ENCODE measurements at regions of chr1 and their contacts with region 1.

Region 1: GRCh38 chr1:150186789-150187559 is 37.3 kb downstream of the PLEKHO1 start:
- DNase-seq: peak; percentile 32
- H3K4me3 Mint-ChIP-seq: peak overlapping the region; percentile 16
- H3K27ac Mint-ChIP-seq: peak overlapping the region; percentile 41
- H3K4me1 Mint-ChIP-seq: peaks cover 19% of the 10 kb centered on the region
- H3K27me3 Mint-ChIP-seq: no peaks in the 10 kb centered on the region

Region 2: GRCh38 chr1:149886396-149887195 is 300.4 kb before region 1 on chr1:
- CTCF ChIA-PET with region 1: interaction called, 47 read pairs
- POLR2A ChIA-PET with region 1: interaction called, 52 read pairs
- DNase-seq: peak; percentile 91
- H3K4me3 Mint-ChIP-seq: no peak overlapping the region
- H3K27ac Mint-ChIP-seq: no peak overlapping the region
- H3K4me1 Mint-ChIP-seq: peaks cover 16% of the 10 kb centered on the region
- H3K27me3 Mint-ChIP-seq: no peaks in the 10 kb centered on the region

Region 3: DNA sequence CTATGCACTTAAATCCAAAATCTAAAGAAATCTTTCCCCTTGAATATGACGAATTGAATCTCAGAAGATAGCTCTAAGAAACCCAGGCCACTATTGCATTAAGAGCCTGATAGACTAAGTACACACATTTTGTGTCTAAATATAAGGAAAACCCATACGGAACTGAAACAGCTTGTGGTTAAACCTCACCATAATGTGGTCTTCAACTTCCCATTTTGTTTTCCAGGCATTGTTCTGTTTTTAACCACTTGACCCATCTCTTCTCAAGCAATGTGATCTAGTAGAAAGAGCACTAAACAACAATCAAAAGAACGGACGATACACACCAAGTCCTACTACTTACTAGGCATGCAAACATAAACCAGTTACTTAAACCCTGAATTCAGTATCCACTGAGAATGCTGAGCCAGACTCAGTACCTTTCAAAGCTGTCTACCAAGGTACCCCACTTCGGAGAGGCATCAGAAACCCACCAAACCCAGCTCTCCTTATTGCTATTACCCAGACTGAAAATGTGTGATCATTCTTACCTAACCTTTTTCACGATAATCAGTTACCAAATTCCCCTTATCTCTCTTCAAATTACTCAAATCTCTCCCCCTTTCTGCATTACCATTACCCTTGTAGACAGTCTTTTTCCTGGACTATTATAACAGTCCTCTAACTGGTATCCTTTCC is 189.2 kb before region 1 on chr1:
- CTCF ChIA-PET with region 1: interaction called, 16 read pairs
- POLR2A ChIA-PET with region 1: no interaction called
- DNase-seq: no peak
- H3K4me3 Mint-ChIP-seq: no peak overlapping the region
- H3K27ac Mint-ChIP-seq: no peak overlapping the region
- H3K4me1 Mint-ChIP-seq: peaks cover 43% of the 10 kb centered on the region
- H3K27me3 Mint-ChIP-seq: no peaks in the 10 kb centered on the region

Region 4: DNA sequence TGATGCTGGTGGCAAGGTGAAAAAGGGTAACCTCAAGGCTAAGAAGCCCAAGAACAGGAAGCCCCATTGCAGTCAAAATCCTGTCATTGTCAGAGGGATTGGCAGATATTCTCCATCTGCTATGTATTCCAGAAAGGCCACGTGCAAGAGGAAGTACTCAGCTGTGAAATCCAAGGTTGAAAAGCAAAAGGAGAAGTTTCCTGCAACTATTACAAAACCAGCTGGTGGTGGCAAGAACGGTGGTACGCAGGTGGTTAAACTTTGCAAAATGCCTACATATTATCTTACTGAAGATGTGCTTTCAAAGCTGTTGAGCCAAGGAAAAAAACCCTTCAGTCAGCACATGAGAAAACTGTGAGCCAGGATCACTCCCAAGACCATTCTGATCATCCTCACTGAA is 133.0 kb before region 1 on chr1:
- CTCF ChIA-PET with region 1: interaction called, 23 read pairs
- POLR2A ChIA-PET with region 1: no interaction called
- DNase-seq: no peak
- H3K4me3 Mint-ChIP-seq: no peak overlapping the region
- H3K27ac Mint-ChIP-seq: no peak overlapping the region
- H3K4me1 Mint-ChIP-seq: peaks cover 3% of the 10 kb centered on the region
- H3K27me3 Mint-ChIP-seq: peaks cover 11% of the 10 kb centered on the region

Region 5: DNA sequence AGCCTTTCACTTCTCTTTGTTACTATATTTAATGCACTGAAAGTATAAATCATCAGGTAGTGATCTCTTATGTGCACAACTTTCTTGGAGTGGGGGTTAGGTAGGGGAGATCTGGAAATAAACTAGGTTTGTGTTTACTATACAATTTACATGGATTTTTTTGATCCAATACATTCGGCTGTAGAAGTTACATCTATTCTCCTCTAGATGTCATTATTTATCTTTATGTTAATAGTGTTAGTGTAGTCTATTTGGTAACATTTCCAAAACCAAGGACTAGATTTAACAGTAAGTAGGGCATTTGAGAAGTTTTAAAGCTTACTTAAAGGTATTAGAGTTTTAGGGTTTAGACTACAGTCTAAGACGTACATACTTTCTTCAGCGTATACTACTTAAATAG is 114.0 kb before region 1 on chr1:
- CTCF ChIA-PET with region 1: interaction called, 120 read pairs
- POLR2A ChIA-PET with region 1: interaction called, 13 read pairs
- DNase-seq: no peak
- H3K4me3 Mint-ChIP-seq: no peak overlapping the region
- H3K27ac Mint-ChIP-seq: peak overlapping the region; percentile 24
- H3K4me1 Mint-ChIP-seq: peaks cover 47% of the 10 kb centered on the region
- H3K27me3 Mint-ChIP-seq: no peaks in the 10 kb centered on the region

Region 6: GRCh38 chr1:150156868-150157603 is 29.9 kb before region 1 on chr1:
- CTCF ChIA-PET with region 1: interaction called, 61 read pairs
- POLR2A ChIA-PET with region 1: interaction called, 6 read pairs
- DNase-seq: no peak
- H3K4me3 Mint-ChIP-seq: no peak overlapping the region
- H3K27ac Mint-ChIP-seq: no peak overlapping the region
- H3K4me1 Mint-ChIP-seq: peaks cover 86% of the 10 kb centered on the region
- H3K27me3 Mint-ChIP-seq: no peaks in the 10 kb centered on the region

Region 7: DNA sequence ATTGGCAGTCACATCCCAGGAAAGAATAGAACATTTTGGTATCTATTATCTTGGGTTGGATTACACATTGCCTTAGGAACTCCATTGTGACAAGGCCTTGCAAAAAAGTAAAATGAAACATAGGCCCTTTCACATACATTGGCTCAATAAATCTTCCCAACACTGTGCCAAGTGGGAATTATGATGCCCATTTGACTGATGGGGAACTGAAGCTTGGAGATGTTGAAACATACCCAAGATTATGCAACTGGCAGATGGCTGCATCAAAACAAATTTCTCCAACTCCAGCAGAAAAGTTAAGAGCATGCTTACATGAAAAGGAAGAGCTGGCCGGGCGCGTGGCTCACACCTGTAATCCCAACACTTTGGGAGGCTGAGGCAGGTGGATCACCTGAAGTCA is 10.4 kb before region 1 on chr1:
- CTCF ChIA-PET with region 1: interaction called, 42 read pairs
- POLR2A ChIA-PET with region 1: no interaction called
- DNase-seq: no peak
- H3K4me3 Mint-ChIP-seq: no peak overlapping the region
- H3K27ac Mint-ChIP-seq: no peak overlapping the region
- H3K4me1 Mint-ChIP-seq: peaks cover 1% of the 10 kb centered on the region
- H3K27me3 Mint-ChIP-seq: no peaks in the 10 kb centered on the region